CD8-positive, alpha-beta T cell (primary cell): ENCODE measurements at regions of chr17 and their contacts with region 1.

Region 1: GRCh38 chr17:61002316-61002736 is 324.7 kb downstream of the BCAS3 start:
- DNase-seq: peak in 2 of 9 experiments; percentile 19 to 47
- ATAC-seq: no peak
- H3K4me3 ChIP-seq: no peak overlapping the region
- H3K4me3 Mint-ChIP-seq: no peak overlapping the region
- H3K27ac ChIP-seq: no peak overlapping the region
- H3K27ac Mint-ChIP-seq: no peak overlapping the region
- H3K4me1 ChIP-seq: no peaks in the 10 kb centered on the region
- H3K4me1 Mint-ChIP-seq: no peaks in the 10 kb centered on the region
- H3K27me3 ChIP-seq: no peaks in the 10 kb centered on the region
- H3K27me3 Mint-ChIP-seq: no peaks in the 10 kb centered on the region
- CTCF ChIP-seq: peak; percentile 78

Region 2: GRCh38 chr17:61029193-61029592 is 26.9 kb after region 1 on chr17:
- CTCF ChIA-PET with region 1: no interaction called
- POLR2A ChIA-PET with region 1: no interaction called
- intact Hi-C with region 1: no loop called
- DNase-seq: no peak
- ATAC-seq: no peak
- H3K4me3 ChIP-seq: no peak overlapping the region
- H3K4me3 Mint-ChIP-seq: no peak overlapping the region
- H3K27ac ChIP-seq: no peak overlapping the region
- H3K27ac Mint-ChIP-seq: no peak overlapping the region
- H3K4me1 ChIP-seq: no peaks in the 10 kb centered on the region
- H3K4me1 Mint-ChIP-seq: peaks cover 6% of the 10 kb centered on the region
- H3K27me3 ChIP-seq: no peaks in the 10 kb centered on the region
- H3K27me3 Mint-ChIP-seq: no peaks in the 10 kb centered on the region
- CTCF ChIP-seq: no peak

Region 3: DNA sequence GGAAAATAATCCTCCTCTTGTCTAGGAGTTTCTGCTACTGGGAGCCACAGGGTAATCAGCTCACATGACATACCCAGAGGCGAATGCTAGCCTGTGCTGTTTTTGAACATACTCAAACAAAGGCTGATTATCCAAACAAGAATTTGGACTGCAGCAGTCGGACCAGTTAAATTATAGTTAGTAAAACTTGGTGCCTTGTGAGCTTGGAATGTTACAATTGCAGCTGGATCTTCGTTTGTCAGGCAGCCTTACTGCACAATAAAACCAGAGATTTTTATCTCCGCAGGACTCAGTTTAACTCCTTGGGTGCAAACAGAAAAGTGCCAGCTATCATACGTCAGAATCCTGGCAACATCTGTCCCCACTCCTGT is 233.5 kb after region 1 on chr17:
- CTCF ChIA-PET with region 1: no interaction called
- POLR2A ChIA-PET with region 1: no interaction called
- intact Hi-C with region 1: loop called in 1 of 2 experiments (anchors 10 kb)
- DNase-seq: no peak
- ATAC-seq: no peak
- H3K4me3 ChIP-seq: no peak overlapping the region
- H3K4me3 Mint-ChIP-seq: no peak overlapping the region
- H3K27ac ChIP-seq: no peak overlapping the region
- H3K27ac Mint-ChIP-seq: no peak overlapping the region
- H3K4me1 ChIP-seq: no peaks in the 10 kb centered on the region
- H3K4me1 Mint-ChIP-seq: peaks cover 4% of the 10 kb centered on the region
- H3K27me3 ChIP-seq: no peaks in the 10 kb centered on the region
- H3K27me3 Mint-ChIP-seq: no peaks in the 10 kb centered on the region
- CTCF ChIP-seq: no peak

Region 4: GRCh38 chr17:61361084-61361483 is 358.8 kb after region 1 on chr17:
- CTCF ChIA-PET with region 1: interaction called, 10 read pairs
- POLR2A ChIA-PET with region 1: no interaction called
- intact Hi-C with region 1: loop called (anchors 2 kb)
- DNase-seq: no peak
- ATAC-seq: no peak
- H3K4me3 ChIP-seq: no peak overlapping the region
- H3K4me3 Mint-ChIP-seq: no peak overlapping the region
- H3K27ac ChIP-seq: no peak overlapping the region
- H3K27ac Mint-ChIP-seq: no peak overlapping the region
- H3K4me1 ChIP-seq: no peaks in the 10 kb centered on the region
- H3K4me1 Mint-ChIP-seq: no peaks in the 10 kb centered on the region
- H3K27me3 ChIP-seq: no peaks in the 10 kb centered on the region
- H3K27me3 Mint-ChIP-seq: no peaks in the 10 kb centered on the region
- CTCF ChIP-seq: no peak

Region 5: DNA sequence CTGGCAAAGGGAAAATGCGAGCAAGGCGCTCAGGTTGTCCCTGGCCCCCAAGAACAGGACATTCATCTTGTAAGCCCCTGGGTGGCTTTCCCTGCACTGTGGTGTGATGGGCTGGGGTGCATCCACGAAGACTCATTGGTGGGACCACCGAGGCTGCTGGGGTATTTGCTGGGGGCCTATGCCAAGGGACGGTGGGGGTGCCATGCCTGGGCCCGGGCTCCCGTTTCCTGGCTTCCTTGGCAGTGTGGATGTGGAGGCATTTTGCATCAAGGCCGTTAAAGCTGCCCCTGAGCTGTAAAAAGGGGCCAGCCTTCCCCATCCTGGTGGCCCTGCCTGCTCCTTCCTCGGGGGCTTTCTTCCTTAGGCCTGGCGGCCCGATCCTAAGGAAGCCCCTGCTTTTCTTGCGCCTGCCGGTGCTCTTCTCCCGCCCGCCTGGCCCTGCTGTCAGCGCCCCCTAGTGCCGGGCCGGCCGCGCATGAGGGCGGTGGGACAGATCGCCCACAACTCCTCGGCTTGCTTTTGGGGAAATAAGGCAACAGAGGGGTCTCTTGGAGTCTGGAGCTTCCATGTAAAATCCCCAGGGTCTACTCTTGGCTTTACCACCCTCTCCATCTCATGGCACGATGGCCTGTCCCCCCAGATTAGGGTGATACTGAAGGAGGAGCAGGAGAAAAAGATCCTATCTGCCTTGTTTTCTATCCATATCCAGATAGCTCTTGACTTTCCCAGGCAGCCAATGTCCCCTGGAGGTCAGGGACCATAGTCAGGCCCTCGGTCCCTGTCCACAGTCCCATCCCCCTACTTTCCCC is 387.5 kb after region 1 on chr17:
- CTCF ChIA-PET with region 1: interaction called, 10 read pairs
- POLR2A ChIA-PET with region 1: no interaction called
- intact Hi-C with region 1: loop called in 1 of 2 experiments (anchors 2 kb)
- DNase-seq: peak in 5 of 9 experiments; percentile 28 to 63 (median 55)
- ATAC-seq: no peak
- H3K4me3 ChIP-seq: no peak overlapping the region
- H3K4me3 Mint-ChIP-seq: no peak overlapping the region
- H3K27ac ChIP-seq: no peak overlapping the region
- H3K27ac Mint-ChIP-seq: no peak overlapping the region
- H3K4me1 ChIP-seq: no peaks in the 10 kb centered on the region
- H3K4me1 Mint-ChIP-seq: peaks cover 7% of the 10 kb centered on the region
- H3K27me3 ChIP-seq: no peaks in the 10 kb centered on the region
- H3K27me3 Mint-ChIP-seq: peaks cover 15% of the 10 kb centered on the region
- CTCF ChIP-seq: peak; percentile 70